ENCODE measurements at regions of chr17 and their contacts with region 1.

Region 1: DNA sequence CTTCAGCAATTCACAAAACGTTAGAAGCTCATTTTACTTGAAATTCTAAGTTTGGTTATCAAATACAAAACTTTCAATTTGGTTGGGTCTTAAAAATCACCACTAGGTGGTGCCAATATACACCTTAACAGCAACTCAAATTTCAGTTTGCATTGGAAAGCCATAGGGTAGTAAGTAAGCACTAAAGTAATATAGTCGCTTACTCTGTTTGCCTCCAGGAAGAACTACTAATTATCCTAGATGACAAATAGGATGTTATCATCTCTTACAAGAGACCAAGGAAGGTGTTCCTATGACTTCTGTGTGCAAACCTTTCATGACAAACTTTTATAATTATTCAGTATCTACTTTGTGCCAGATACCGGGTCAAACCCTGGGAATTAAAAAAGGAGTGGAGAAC is 93.3 kb downstream of the MYO1D start:
- DNase-seq: peak; percentile 68
- H3K4me3 ChIP-seq: no peak overlapping the region
- H3K27ac ChIP-seq: no peak overlapping the region
- H3K4me1 ChIP-seq: no peaks in the 10 kb centered on the region
- CTCF ChIP-seq: peak; percentile 93

Region 2: DNA sequence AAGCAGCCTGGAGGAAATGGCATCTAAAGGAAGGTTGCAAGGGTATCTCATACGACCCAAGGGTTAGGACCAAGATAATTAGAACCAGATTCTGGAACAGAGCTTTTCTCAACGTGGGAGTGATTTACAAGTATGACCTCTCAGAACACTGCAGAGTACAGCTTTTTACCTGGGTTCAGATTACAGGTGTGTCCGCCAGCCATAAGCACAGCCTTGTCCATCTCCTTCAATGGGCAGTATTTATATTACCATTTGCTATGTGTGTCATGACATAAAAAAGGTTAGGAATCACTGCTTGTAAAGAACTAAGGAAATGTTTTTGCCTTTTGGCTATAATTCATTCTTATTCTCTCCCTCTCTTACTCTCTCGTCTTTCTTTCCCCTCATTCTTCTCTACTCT is 56.6 kb after region 1 on chr17:
- CTCF ChIA-PET with region 1: no interaction called
- POLR2A ChIA-PET with region 1: no interaction called
- intact Hi-C with region 1: no loop called
- DNase-seq: no peak
- H3K4me3 ChIP-seq: no peak overlapping the region
- H3K27ac ChIP-seq: no peak overlapping the region
- H3K4me1 ChIP-seq: no peaks in the 10 kb centered on the region
- CTCF ChIP-seq: no peak

Region 3: GRCh38 chr17:32877164-32877764 is 93.7 kb after region 1 on chr17:
- CTCF ChIA-PET with region 1: no interaction called
- POLR2A ChIA-PET with region 1: no interaction called
- intact Hi-C with region 1: loop called (anchors 2 kb)
- DNase-seq: peak; percentile 88
- H3K4me3 ChIP-seq: peak overlapping the region; percentile 67
- H3K27ac ChIP-seq: no peak overlapping the region
- H3K4me1 ChIP-seq: no peaks in the 10 kb centered on the region
- CTCF ChIP-seq: peak; percentile 75

Region 4: GRCh38 chr17:32909787-32910369 is 126.3 kb after region 1 on chr17:
- CTCF ChIA-PET with region 1: no interaction called
- POLR2A ChIA-PET with region 1: no interaction called
- intact Hi-C with region 1: loop called (anchors 1 kb)
- DNase-seq: peak; percentile 62
- H3K4me3 ChIP-seq: no peak overlapping the region
- H3K27ac ChIP-seq: no peak overlapping the region
- H3K4me1 ChIP-seq: no peaks in the 10 kb centered on the region
- CTCF ChIP-seq: peak; percentile 79

Region 5: GRCh38 chr17:32936894-32937500 is 153.4 kb after region 1 on chr17:
- CTCF ChIA-PET with region 1: no interaction called
- POLR2A ChIA-PET with region 1: no interaction called
- intact Hi-C with region 1: loop called (anchors 1 kb)
- DNase-seq: peak; percentile 64
- H3K4me3 ChIP-seq: no peak overlapping the region
- H3K27ac ChIP-seq: no peak overlapping the region
- H3K4me1 ChIP-seq: no peaks in the 10 kb centered on the region
- CTCF ChIP-seq: peak; percentile 85

Region 6: GRCh38 chr17:32997753-32998632 is 214.4 kb after region 1 on chr17:
- CTCF ChIA-PET with region 1: no interaction called
- POLR2A ChIA-PET with region 1: no interaction called
- intact Hi-C with region 1: loop called (anchors 2 kb)
- DNase-seq: peak; percentile 61
- H3K4me3 ChIP-seq: no peak overlapping the region
- H3K27ac ChIP-seq: no peak overlapping the region
- H3K4me1 ChIP-seq: no peaks in the 10 kb centered on the region
- CTCF ChIP-seq: peak; percentile 85